Activated naive CD4-positive, alpha-beta T cell treated with anti-CD3 and anti-CD28 coated beads for 36 hours (primary cell): ENCODE measurements at regions of chr6 and their contacts with region 1.

Region 1: DNA sequence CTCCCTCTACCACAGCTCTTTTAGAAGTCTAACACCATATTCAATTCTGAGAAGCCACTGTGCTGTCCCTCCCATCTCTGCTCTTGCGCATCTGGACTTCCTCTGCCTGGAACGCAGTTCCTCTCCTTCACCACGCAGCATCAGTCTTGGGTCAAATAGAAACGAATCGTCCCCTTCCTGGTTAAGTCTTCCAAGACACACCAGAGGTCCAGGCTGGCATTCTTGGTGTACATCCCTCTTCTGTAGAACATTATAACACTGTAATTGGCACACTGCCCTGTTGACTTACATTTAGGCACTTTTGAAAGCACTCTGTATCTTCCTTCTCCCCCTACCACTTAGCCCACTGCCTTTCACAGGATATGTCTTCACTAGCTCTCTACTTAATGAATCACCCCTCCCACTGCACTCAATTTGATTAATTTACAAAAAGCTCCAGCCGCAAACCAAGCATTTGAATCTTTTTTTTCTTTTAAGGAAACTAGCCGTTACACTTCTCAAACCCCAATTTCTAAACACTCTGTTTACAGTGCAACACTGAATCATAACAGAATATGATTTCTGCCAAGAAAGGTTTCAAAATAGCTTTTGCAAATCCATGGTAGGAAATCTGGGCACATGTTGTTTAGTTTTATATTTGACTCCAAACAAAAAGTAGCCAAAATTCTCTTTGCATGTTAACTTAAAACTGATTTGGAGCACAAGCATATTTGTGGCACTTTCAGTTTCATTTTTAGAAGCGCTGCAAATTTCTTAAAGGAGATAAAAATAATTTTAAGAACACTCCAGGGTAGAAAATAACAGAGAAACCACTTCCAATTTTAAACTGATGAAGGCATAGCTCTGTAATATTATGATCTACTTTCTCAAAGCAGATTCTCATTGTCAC is 140.7 kb upstream of the CARMIL1 start:
- DNase-seq: peak; percentile 82
- H3K4me3 Mint-ChIP-seq: peak overlapping the region; percentile 88
- H3K27ac Mint-ChIP-seq: peak overlapping the region; percentile 98
- H3K4me1 Mint-ChIP-seq: peaks cover 46% of the 10 kb centered on the region
- H3K27me3 Mint-ChIP-seq: no peaks in the 10 kb centered on the region

Region 2: GRCh38 chr6:24883618-24884017 is 254.9 kb before region 1 on chr6:
- CTCF ChIA-PET with region 1: no interaction called
- intact Hi-C with region 1: loop called (anchors 1 kb)
- DNase-seq: peak; percentile 82
- H3K4me3 Mint-ChIP-seq: peak overlapping the region; percentile 73
- H3K27ac Mint-ChIP-seq: peak overlapping the region; percentile 99
- H3K4me1 Mint-ChIP-seq: peaks cover 91% of the 10 kb centered on the region
- H3K27me3 Mint-ChIP-seq: no peaks in the 10 kb centered on the region

Region 3: DNA sequence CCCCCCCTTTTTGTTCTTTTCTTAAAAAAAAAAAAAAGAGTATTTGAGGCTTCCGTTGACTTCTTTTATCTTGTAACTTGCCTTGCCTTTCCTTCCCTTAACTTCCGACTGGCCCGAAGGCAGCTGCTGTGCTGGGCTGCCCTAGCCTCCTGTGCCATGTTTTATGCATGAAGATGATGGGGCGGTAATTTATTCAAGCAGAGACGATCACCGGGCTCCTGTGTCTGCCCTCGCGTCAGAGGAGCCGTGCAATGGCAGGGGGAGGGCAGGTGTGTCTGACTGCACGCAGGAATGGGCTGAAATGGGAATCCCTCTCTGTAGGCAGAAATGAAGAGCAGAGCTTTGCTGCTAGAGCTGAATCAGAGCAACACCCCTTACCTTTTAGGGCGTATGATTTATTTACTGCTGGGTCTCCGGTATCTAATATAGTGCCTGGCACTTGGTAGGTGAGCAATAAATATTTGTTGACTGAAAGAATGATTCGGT is 96.4 kb before region 1 on chr6:
- CTCF ChIA-PET with region 1: no interaction called
- intact Hi-C with region 1: loop called (anchors 1 kb)
- DNase-seq: peak; percentile 73
- H3K4me3 Mint-ChIP-seq: peak overlapping the region; percentile 92
- H3K27ac Mint-ChIP-seq: peak overlapping the region; percentile 97
- H3K4me1 Mint-ChIP-seq: peaks cover 66% of the 10 kb centered on the region
- H3K27me3 Mint-ChIP-seq: no peaks in the 10 kb centered on the region

Region 4: DNA sequence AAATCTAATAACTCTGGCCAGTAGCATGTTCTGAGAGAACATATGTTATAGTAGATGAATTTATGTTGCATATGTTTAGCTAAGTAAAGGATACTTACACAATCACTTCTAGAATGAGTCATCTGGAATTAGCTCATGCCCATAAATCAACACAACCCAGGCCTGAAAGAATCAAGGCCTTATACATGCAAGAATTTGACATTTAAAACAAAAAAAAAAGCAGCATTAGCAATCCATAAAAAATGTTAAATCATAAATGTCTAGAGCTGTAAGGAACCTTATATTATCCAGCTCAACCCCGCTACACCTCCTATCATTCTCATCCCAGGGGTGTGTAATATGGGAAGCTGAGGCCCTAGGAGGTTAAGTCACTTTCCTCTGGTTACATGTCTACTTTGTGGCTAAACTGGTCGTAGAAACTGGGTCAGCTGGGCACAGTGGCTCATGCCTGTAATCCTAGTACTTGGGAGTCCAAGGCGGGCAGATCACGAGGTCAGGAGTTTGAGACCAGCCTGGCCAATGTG is 35.5 kb after region 1 on chr6:
- CTCF ChIA-PET with region 1: no interaction called
- intact Hi-C with region 1: loop called (anchors 1 kb)
- DNase-seq: no peak
- H3K4me3 Mint-ChIP-seq: no peak overlapping the region
- H3K27ac Mint-ChIP-seq: no peak overlapping the region
- H3K4me1 Mint-ChIP-seq: peaks cover 45% of the 10 kb centered on the region
- H3K27me3 Mint-ChIP-seq: no peaks in the 10 kb centered on the region

Region 5: DNA sequence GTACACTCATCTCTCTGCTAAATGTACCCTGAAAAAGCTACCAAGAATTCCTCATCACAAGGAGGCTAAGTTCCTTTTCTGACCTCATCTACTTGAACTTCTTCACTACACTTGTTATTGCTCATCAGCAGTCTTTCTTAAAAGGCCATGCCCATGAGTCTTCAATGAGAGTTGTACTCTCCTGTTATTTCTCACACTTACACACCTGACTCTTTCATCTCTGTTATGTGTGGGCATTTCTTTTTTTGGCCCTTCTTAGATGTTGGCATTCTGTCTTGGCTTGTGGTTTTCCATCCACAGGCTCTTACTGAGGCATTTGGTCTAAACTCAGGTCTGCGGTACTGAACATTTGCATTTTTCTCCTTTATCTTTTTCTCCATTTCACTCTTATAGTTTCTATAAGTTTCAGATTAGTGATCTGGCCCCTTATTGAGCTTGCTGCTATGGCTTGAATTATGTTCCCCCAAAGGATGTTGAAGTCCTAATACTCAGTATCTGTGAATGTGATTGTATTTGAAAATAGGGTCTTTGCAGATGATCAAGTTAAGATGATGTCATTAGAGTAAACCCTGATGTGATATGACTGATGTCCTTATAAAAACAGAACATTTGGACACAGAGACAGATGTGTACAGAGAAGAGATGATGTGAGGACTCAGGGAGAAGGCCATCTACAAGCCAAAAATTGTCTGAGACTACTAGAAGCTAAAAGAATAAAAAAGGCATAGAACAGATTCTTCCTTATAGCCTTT is 704.2 kb after region 1 on chr6:
- CTCF ChIA-PET with region 1: no interaction called
- intact Hi-C with region 1: loop called (anchors 1 kb)
- DNase-seq: no peak
- H3K4me3 Mint-ChIP-seq: no peak overlapping the region
- H3K27ac Mint-ChIP-seq: no peak overlapping the region
- H3K4me1 Mint-ChIP-seq: no peaks in the 10 kb centered on the region
- H3K27me3 Mint-ChIP-seq: peaks cover 8% of the 10 kb centered on the region

Region 6: DNA sequence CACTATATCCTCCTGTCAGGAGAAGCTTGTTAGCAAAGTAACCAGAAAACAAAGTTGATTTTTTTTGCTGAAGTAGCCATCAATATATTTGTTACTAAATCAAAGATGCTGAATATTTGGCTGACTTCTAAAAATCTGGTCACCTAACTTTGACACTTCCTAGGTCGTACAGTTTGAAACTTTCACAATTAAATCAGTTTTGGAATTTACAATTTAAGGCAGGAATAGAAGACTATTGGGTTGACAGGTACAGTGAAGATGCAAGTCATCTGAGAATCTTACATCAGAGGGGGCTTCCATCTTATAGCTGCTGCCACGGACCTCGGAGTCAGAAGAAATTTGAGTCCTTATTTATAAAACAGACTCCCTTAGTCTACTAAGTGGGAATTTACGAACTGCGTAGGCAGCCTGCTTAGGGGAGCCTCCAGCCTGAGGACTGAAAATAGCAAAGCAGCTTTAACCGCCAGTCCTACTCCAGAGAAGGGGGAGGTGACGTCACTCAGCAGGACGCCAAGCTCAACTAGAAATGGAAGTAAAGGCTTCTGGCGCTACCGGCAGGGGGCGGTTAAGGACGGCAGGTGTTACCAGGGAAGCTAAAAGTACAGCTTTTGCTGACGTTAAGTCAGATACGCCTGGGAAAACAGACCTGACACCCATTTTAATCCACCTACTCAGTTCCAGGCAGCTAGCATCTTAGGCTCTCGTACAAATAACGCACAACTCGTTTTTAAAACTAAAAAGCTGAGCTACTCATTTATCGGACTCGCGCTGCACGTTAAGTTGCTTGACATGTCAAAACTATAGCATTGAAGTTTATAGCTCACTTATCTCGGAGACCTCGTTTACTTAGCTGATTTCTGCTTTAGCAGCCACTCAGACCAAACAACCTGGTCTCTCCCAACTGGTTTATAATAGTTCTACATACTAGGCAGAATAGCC is 887.7 kb after region 1 on chr6:
- CTCF ChIA-PET with region 1: no interaction called
- intact Hi-C with region 1: loop called (anchors 2 kb)
- DNase-seq: peak; percentile 98
- H3K4me3 Mint-ChIP-seq: peak overlapping the region; percentile 87
- H3K27ac Mint-ChIP-seq: peak overlapping the region; percentile 99
- H3K4me1 Mint-ChIP-seq: peaks cover 31% of the 10 kb centered on the region
- H3K27me3 Mint-ChIP-seq: no peaks in the 10 kb centered on the region